ENCODE measurements at regions of chr12 and their contacts with region 1.

Region 1: DNA sequence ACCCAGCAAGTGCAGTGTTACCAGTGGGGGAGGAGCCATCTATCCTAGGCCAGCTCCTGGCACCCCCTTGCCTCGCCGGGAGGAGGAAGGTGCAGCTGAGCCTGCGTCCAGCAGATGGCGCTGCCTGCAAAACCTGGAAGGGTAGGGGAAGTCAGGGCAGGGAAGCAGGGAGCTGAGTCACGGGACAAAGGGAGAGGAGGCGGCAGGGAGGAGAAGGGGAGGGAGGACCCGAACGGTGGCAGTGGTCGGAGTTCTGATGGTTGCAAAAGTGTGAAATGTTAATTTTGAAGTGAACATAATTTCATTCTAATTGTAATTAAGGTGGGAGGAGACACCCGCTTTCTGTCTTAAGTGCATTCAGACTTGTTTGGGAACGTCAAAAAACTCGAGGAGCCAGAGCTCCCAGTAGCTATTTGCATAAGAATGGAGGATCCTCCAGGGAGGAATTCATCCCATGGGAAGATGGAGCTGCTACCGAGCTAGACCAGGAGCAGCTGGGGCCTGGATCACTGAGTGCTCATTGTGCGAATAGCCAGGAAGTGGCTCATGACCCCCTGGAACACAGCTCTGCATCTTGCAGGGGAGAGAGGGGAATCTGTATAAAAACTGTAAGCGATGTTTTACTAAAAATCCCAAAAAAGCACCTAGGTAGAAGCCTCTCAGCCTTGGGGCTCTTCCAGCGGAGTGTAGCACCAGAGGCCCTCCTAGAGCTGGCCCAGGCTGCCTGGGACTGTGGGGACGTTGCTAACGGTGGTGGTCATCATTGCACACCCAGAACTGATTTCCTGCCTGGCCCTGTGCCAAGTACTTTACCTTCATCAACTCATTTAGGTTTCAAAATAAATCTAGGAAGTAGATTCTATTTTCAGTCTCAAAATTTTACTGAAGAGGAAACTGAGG is 59.5 kb downstream of the EMP1 start:
- DNase-seq: peak; percentile 88 to 99 (median 96)

Region 2: DNA sequence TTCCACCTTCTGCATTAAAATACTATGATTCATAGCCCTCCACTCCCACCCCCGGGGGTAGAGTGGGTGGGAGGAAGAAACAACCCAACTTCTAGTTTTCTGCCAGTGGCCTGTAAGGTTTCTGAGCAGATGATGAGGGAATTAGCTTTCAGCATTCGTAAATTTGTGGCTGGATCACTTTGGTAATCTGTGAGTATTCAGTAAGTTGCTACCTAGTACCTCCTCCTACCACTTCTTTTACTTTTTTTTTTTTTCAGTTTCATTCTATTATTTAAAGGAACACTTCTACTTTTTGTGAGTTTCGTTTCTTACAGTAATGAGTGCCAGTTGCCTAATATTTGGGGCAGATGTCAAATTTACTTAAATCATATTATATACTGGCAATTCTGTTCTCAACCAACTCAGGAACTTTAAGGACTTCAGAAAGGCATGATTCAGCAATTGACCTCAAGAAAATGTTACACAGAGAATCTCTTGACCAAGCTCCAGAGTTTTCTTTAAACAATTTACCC is 102.0 kb before region 1 on chr12:
- intact Hi-C with region 1: no loop called
- DNase-seq: no peak

Region 3: DNA sequence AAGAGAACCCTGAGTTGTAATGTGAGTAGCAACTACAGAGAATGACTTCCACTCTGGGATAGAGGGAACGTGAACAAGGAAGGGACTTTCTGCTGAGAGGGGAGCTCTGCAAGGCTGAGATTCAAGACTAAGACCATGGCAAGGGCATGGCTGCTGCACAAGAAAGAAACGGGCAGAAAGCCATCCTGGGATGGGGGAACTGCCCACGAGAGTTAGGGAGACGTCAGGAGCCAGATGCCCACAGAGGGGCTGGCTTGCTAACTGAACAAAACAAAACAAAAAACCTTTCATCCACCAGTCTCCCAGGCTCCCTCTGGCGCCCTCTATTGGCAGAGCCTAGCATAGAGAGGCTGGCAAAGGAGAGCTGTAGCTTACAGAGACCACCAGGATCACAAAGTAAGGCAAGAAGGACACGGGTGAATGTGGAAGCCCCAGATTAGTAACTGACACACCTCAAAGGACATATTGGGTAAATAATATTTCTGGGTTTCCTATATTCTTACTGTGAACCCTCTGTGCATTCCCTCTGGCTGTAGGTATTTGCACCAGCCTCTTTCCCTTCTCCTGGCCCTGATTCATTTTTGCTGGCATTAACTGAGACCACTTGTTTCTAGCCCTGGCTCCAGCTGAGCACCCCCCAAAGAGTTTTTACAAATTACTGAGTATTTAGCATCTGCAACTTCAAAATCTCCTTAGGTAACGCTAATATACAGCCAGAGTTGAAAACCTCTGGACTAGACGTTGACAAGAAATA is 278.8 kb after region 1 on chr12:
- intact Hi-C with region 1: loop called (anchors 5 kb)
- DNase-seq: peak; percentile 55 to 96 (median 86)

Region 4: GRCh38 chr12:13559318-13559978 is 303.4 kb after region 1 on chr12:
- intact Hi-C with region 1: no loop called
- DNase-seq: no peak